Caco-2 (cell line): ENCODE measurements at regions of chr12 and their contacts with region 1.

Region 1: DNA sequence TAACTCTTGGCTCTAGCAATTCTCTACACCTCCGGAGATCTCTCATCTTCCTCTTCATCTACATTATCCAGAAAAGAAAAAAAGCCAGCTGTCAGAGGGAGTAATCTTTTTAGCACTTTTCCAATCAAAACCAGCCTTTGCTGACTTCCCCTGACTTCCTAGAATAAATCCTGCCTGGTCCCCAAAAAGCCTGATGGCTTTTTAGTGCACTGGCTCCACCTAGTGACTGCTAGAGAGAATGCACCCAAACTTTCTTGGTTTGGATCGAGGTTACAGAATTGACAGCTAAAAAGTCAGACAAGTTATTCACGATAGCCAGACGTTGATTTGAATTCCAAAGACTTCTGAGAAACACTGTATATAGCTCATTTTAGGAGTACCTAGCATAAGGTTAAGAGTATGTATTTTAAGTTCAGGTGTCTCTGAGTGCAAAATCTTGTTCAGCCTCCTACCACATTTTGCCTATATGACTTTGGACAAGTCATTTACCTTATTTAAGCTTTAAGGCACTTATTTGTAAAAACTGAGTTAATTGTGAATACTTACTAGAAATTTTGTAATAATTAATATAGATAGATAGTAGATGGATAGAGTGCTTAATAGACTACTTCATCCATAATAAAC is 185.7 kb upstream of the GRIN2B start:
- DNase-seq: peak; percentile 64 to 80
- H3K4me3 ChIP-seq: no peak overlapping the region
- H3K4me3 Mint-ChIP-seq: no peak overlapping the region
- H3K27ac Mint-ChIP-seq: no peak overlapping the region
- H3K4me1 ChIP-seq: no peaks in the 10 kb centered on the region
- H3K4me1 Mint-ChIP-seq: no peaks in the 10 kb centered on the region
- H3K27me3 ChIP-seq: no peaks in the 10 kb centered on the region
- H3K27me3 Mint-ChIP-seq: peaks cover 3% of the 10 kb centered on the region
- CTCF ChIP-seq: peak; percentile 97 to 98

Region 2: GRCh38 chr12:13255792-13256691 is 911.1 kb before region 1 on chr12:
- CTCF ChIA-PET with region 1: interaction called, 12 read pairs
- POLR2A ChIA-PET with region 1: no interaction called
- intact Hi-C with region 1: loop called (anchors 5 kb)
- DNase-seq: peak; percentile 96 to 99
- H3K4me3 ChIP-seq: peak overlapping the region; percentile 37
- H3K4me3 Mint-ChIP-seq: peak overlapping the region; percentile 88
- H3K27ac Mint-ChIP-seq: peak overlapping the region; percentile 90
- H3K4me1 ChIP-seq: peaks cover 23% of the 10 kb centered on the region
- H3K4me1 Mint-ChIP-seq: peaks cover 24% of the 10 kb centered on the region
- H3K27me3 ChIP-seq: no peaks in the 10 kb centered on the region
- H3K27me3 Mint-ChIP-seq: no peaks in the 10 kb centered on the region
- CTCF ChIP-seq: peak; percentile 98 to 100

Region 3: DNA sequence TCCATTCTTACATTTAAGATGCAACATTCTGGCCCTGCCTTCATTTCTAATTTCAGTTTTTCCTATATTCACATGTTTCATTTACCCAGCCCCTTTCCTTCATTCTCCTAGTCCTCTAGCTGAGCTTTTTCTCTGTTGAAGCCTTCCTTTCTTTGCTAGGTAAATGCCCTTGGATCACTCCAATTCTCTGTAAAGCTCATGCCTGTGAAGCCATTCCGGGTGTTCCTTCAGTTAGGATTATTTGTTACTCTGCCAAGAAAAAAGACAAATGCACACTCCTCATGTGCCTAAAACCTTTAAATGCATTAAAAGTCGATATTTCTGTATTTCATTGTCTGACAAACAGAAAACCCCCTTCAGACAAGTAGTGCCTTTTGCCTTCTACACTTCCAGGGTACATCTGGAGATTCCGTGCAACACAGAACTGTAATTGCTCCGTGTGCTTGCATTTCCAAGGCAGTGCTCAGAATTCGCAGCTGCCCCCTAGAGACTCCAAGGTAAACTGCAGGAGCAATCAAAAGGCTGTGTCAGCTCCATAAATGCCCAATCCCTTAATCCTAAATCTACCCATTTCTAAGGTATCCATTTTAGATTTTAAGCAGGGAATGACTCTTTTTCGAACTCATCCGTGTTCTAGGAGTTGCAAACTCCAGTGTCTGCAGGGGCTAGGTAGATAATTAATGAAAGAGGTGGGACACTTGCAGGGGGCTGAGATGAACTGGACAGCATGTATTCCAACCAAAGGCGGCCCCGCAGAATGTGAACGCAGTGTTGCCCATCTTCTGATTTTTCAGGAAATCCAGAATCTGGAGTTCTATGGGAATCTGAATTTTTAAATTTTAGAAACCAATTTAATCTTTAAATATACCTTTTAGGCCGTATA is 505.9 kb before region 1 on chr12:
- CTCF ChIA-PET with region 1: no interaction called
- POLR2A ChIA-PET with region 1: no interaction called
- intact Hi-C with region 1: loop called (anchors 1 kb)
- DNase-seq: peak; percentile 60 to 67
- H3K4me3 ChIP-seq: no peak overlapping the region
- H3K4me3 Mint-ChIP-seq: no peak overlapping the region
- H3K27ac Mint-ChIP-seq: no peak overlapping the region
- H3K4me1 ChIP-seq: no peaks in the 10 kb centered on the region
- H3K4me1 Mint-ChIP-seq: no peaks in the 10 kb centered on the region
- H3K27me3 ChIP-seq: no peaks in the 10 kb centered on the region
- H3K27me3 Mint-ChIP-seq: no peaks in the 10 kb centered on the region
- CTCF ChIP-seq: peak; percentile 94 to 97

Region 4: DNA sequence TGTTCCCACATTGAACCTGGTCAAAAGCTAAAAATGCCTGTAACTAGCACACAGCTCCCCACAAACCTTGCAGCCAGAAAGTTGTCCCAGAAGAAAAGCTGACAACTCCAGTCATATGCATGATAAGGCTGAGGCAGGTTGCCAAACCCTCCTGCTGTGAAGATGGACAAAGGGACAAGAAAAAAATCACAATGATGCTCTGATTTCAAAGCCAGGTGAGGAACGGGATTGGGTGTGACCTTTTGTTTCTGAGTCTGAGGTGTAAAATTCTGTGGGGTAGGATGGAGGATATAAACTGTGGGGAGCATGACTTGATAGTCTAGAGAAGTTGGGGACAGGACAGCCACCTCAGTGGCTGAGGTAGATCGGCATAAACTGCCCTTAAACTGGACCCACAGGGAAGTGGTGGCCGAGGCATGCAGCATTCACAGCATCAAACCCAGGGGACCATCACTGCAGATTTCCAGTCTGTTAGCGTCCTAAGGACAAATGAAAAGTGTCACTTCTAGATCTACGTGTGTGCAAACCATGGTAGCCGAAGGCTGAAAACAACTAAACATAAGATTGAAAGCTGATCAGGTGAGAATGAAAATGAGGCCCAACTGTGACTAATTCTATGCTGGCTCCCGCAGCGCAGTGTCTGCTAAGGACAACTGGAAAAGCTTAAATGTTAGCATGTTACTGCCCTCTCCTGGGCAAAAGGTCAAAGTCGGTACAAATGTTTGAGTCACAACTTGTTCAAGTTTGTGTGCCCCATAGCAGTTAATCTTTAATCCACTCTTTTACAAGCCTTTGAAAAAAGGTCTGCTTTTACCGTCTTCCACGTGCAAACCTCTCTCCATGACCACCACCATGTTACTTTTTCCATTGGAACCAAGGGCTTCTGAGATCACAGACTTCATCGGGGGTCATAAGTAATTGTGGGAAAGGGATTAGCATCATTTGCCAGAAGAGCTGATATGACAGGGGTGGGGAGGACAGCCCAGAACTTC is 225.6 kb before region 1 on chr12:
- CTCF ChIA-PET with region 1: interaction called, 6 read pairs
- POLR2A ChIA-PET with region 1: no interaction called
- intact Hi-C with region 1: loop called (anchors 1 kb)
- DNase-seq: peak; percentile 90
- H3K4me3 ChIP-seq: no peak overlapping the region
- H3K4me3 Mint-ChIP-seq: peak overlapping the region; percentile 23
- H3K27ac Mint-ChIP-seq: peak overlapping the region; percentile 23
- H3K4me1 ChIP-seq: peaks cover 32% of the 10 kb centered on the region
- H3K4me1 Mint-ChIP-seq: peaks cover 24% of the 10 kb centered on the region
- H3K27me3 ChIP-seq: no peaks in the 10 kb centered on the region
- H3K27me3 Mint-ChIP-seq: no peaks in the 10 kb centered on the region
- CTCF ChIP-seq: peak; percentile 65 to 91

Region 5: DNA sequence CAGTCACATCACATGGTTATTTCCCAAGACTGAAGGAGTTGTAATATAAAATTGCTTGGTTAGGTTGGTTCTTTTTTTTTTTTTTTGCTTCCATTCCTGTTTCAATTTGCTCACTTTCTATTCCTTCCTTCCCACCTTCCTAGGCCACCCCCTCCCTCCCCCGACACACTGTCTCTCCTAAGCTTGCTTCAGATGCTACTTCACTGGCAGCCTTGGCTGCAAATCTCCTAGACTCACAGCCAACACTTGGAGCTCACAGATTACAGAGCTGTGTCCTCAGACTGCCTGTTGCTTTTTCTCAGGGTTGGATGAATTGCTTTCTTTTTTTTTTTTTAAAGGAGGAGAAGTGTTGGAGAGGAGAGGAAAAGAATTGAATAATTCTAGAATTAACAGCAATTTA is 108.4 kb before region 1 on chr12:
- CTCF ChIA-PET with region 1: no interaction called
- POLR2A ChIA-PET with region 1: no interaction called
- intact Hi-C with region 1: loop called (anchors 2 kb)
- DNase-seq: no peak
- H3K4me3 ChIP-seq: no peak overlapping the region
- H3K4me3 Mint-ChIP-seq: no peak overlapping the region
- H3K27ac Mint-ChIP-seq: no peak overlapping the region
- H3K4me1 ChIP-seq: no peaks in the 10 kb centered on the region
- H3K4me1 Mint-ChIP-seq: peaks cover 11% of the 10 kb centered on the region
- H3K27me3 ChIP-seq: no peaks in the 10 kb centered on the region
- H3K27me3 Mint-ChIP-seq: peaks cover 3% of the 10 kb centered on the region
- CTCF ChIP-seq: no peak

Region 6: DNA sequence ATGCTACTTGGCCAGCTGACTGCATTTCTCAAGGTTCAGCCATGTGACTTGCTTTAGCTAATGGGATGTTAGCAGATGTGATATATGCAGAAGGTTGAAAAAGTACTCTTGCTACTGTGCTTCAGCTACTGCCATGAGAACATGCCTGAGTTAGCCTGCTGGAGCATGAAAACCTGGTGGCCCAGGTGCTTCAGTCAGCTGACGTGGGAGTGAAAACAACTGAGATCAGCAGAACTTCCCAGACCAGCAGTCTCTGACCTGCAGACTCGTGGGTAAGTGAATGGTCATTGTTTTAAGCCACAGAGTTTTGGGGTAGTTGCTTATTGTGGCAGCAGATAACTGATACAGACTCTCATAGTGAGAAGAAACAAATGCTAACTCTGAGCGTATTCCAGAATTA is 67.1 kb before region 1 on chr12:
- CTCF ChIA-PET with region 1: no interaction called
- POLR2A ChIA-PET with region 1: no interaction called
- intact Hi-C with region 1: no loop called
- DNase-seq: no peak
- H3K4me3 ChIP-seq: no peak overlapping the region
- H3K4me3 Mint-ChIP-seq: no peak overlapping the region
- H3K27ac Mint-ChIP-seq: no peak overlapping the region
- H3K4me1 ChIP-seq: no peaks in the 10 kb centered on the region
- H3K4me1 Mint-ChIP-seq: no peaks in the 10 kb centered on the region
- H3K27me3 ChIP-seq: no peaks in the 10 kb centered on the region
- H3K27me3 Mint-ChIP-seq: peaks cover 11% of the 10 kb centered on the region
- CTCF ChIP-seq: no peak

Region 7: DNA sequence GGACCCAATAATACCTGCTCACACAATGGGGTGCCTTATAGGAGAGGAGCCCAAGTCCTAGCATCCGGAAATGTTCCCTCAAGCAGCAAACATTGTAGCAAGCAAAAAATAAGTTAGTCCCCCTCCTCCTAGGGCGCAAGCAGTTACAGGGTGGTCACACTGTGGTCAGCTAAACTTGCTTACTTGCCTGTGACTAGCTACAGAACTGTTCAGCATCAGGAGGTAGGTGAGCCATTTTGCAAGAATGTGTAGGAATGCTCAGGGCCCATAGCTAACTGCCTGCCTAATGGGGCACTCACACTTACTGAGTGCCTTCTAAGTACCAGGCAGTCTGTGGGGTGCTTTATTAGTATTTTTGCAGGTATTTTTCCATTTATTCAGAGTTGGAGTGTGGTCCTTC is 31.1 kb before region 1 on chr12:
- CTCF ChIA-PET with region 1: interaction called, 11 read pairs
- POLR2A ChIA-PET with region 1: no interaction called
- intact Hi-C with region 1: no loop called
- DNase-seq: no peak
- H3K4me3 ChIP-seq: no peak overlapping the region
- H3K4me3 Mint-ChIP-seq: no peak overlapping the region
- H3K27ac Mint-ChIP-seq: no peak overlapping the region
- H3K4me1 ChIP-seq: no peaks in the 10 kb centered on the region
- H3K4me1 Mint-ChIP-seq: peaks cover 6% of the 10 kb centered on the region
- H3K27me3 ChIP-seq: no peaks in the 10 kb centered on the region
- H3K27me3 Mint-ChIP-seq: no peaks in the 10 kb centered on the region
- CTCF ChIP-seq: no peak

Region 8: GRCh38 chr12:14193639-14194038 is 26.5 kb after region 1 on chr12:
- CTCF ChIA-PET with region 1: no interaction called
- POLR2A ChIA-PET with region 1: no interaction called
- intact Hi-C with region 1: no loop called
- DNase-seq: no peak
- H3K4me3 ChIP-seq: no peak overlapping the region
- H3K4me3 Mint-ChIP-seq: no peak overlapping the region
- H3K27ac Mint-ChIP-seq: no peak overlapping the region
- H3K4me1 ChIP-seq: no peaks in the 10 kb centered on the region
- H3K4me1 Mint-ChIP-seq: no peaks in the 10 kb centered on the region
- H3K27me3 ChIP-seq: no peaks in the 10 kb centered on the region
- H3K27me3 Mint-ChIP-seq: no peaks in the 10 kb centered on the region
- CTCF ChIP-seq: no peak